ENCODE measurements at regions of chr1 and their contacts with region 1.

Region 1: DNA sequence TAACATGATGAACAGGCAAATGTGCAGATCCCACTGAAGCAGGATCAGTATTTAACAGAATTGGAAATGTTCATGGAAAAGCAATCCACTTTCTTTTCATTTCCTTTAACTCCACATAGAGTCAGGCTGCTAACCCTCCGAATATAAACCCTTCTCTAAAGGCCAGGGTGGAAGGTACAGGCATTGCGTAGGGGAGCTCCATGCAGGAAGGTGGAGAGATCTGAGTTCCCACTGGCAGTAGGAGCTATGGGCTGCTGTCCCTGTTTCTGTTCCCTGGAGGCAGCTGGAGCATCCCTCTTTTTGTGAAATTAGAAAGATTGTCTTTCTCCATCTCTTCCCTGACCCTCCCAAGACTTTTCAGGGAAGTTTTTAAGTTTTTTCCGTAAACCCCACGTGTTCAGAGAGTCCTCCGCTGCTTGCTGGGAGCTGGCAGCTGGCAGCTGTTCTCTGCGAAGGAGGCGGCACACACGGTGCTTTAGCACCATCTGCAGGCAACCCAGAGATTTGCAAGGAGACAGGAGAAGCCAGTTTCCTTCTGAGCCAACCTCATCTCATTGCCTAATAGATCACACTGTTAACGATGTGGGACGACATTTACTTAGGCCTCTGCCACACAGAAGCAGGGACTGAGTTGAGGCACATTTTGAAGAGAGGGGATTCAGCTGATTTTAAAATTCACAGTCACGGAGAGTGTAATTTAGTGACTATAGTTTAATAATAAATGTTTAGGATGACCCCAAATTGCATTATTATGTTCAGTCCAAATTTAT is 55.4 kb upstream of the HOOK1 start:
- DNase-seq: peak; percentile 57
- H3K4me3 ChIP-seq: no peak overlapping the region
- CTCF ChIP-seq: peak; percentile 91

Region 2: GRCh38 chr1:58739856-58740466 is 1019.4 kb before region 1 on chr1:
- in situ Hi-C with region 1: loop called (anchors 25 kb)
- DNase-seq: peak; percentile 57
- H3K4me3 ChIP-seq: no peak overlapping the region
- CTCF ChIP-seq: peak; percentile 61

Region 3: DNA sequence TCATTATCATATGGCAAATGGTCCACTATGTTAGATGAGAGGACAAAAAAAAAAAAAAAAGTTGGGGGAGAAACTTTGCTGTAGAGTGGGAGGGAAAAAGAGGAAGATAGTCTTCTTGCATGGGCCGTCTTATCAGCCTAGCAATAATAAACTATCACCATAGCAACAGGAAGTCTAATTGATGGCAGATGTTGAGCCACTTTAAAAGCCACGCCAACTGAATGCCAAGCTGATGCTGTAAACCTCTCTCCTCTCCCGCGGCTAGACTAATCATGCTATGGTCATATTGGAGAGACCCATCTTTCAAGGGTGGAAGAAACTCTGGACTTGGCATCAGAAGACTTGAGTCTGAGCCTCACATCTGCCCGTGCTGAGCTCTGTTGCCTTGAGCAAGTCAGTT is 66.8 kb before region 1 on chr1:
- in situ Hi-C with region 1: no loop called
- DNase-seq: peak; percentile 48
- H3K4me3 ChIP-seq: no peak overlapping the region
- CTCF ChIP-seq: no peak

Measured in astrocyte of the cerebellum (primary cell).